MCF 10A (cell line): ENCODE measurements at regions of chr10 and their contacts with region 1.

Region 1: DNA sequence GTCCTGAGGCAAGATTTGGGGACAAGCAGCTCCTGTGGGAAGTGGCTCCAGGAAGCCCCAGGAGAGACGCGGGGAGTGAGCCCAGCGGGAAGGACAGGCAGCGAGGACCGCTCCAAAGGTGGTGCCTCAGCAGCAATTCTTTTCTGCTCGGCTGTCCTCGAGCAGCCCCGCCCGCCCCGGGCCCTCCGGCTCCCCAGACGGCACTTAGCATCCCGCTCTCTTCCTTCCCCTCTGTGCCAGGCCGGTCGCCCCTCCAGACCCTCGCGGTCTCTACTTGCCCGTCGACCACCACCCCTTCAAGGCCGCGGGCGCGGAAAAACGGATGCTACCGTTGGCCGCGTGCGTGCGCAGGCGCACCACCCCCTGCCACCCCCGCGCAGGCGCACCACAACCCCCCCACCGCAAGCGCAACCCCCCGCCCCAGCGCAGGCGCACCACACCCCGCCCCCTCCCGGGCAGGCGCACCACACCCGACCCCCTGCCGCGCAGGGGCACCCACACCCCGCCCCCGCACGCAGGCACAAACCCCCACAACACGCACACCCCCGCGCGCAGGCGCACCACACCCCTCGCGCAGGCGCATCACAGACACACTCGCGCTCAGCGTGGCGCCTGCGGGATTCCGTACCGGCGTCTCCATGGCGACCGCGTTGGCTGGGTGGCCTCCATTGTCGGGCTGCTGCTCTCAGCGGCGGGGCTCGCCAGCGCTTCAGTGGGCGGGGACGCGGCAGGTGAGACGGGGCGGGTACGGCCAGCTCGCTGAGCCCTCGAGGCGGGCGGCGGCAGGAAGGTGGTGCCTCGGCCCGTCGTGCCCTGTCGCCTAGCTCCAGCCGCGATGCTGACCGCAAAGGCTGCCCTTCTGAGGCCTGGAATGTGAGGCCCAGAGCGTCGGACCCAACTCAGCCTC is at the start of gene LRRC27:
- DNase-seq: peak; percentile 97
- H3K4me3 Mint-ChIP-seq: peak within 1 kb of the TSS; percentile 98
- H3K27ac Mint-ChIP-seq: peak within 1 kb of the TSS; percentile 87
- H3K4me1 Mint-ChIP-seq: peaks cover 19% of the 10 kb centered on the region
- H3K27me3 Mint-ChIP-seq: no peaks in the 10 kb centered on the region
- CTCF ChIP-seq: no peak
- total RNA-seq, gene LRRC27: 9.1 and 10.4 TPM in 2 replicates

Region 2: GRCh38 chr10:132319853-132320669 is 11.7 kb before region 1 on chr10:
- CTCF ChIA-PET with region 1: no interaction called
- POLR2A ChIA-PET with region 1: interaction called, 31 read pairs
- intact Hi-C with region 1: loop called (anchors 1 kb)
- DNase-seq: peak; percentile 91
- H3K4me3 Mint-ChIP-seq: peak overlapping the region; percentile 67
- H3K27ac Mint-ChIP-seq: peak overlapping the region; percentile 97
- H3K4me1 Mint-ChIP-seq: peaks cover 42% of the 10 kb centered on the region
- H3K27me3 Mint-ChIP-seq: no peaks in the 10 kb centered on the region
- CTCF ChIP-seq: no peak